ENCODE measurements at regions of chr14 and their contacts with region 1.

Region 1: GRCh38 chr14:56339855-56340701 is 221.9 kb downstream of the PELI2 start:
- DNase-seq: peak; percentile 84 to 91
- ATAC-seq: peak; percentile 91
- H3K4me3 ChIP-seq: no peak overlapping the region
- H3K27ac ChIP-seq: no peak overlapping the region
- H3K4me1 ChIP-seq: peaks cover 2 to 8% of the 10 kb centered on the region in 2 donors
- H3K27me3 ChIP-seq: no peaks in the 10 kb centered on the region

Region 2: DNA sequence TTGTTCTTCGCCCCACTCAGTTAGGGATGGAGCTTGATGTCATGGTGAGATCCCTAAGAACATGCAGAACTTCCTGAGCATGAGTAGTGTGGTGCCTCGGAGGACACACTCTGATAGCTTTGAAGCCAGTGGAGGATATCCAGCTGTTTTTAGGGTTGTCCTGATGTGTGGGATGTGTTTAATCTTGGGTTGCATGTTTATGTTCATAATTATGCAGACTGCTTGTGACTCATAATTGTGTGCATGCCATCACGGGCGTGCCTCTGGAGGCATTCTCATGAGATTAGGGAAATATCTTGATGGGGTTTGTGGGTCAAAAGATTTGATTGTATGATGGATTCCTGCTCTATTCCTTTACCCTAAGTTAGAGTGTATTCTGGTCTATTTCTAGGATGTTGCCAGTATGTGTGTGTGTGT is 489.2 kb before region 1 on chr14:
- intact Hi-C with region 1: loop called in 1 of 2 experiments (anchors 10 kb)
- DNase-seq: no peak
- ATAC-seq: no peak
- H3K4me3 ChIP-seq: no peak overlapping the region
- H3K27ac ChIP-seq: no peak overlapping the region
- H3K4me1 ChIP-seq: peaks cover 0 to 12% of the 10 kb centered on the region in 2 donors
- H3K27me3 ChIP-seq: no peaks in the 10 kb centered on the region

Region 3: GRCh38 chr14:55938249-55938791 is 401.8 kb before region 1 on chr14:
- intact Hi-C with region 1: no loop called
- DNase-seq: peak in 1 of 2 donors; percentile 47
- ATAC-seq: no peak
- H3K4me3 ChIP-seq: no peak overlapping the region
- H3K27ac ChIP-seq: no peak overlapping the region
- H3K4me1 ChIP-seq: no peaks in the 10 kb centered on the region
- H3K27me3 ChIP-seq: no peaks in the 10 kb centered on the region

Region 4: GRCh38 chr14:56117765-56118610 is 222.1 kb before region 1 on chr14 and contains the start of gene PELI2:
- intact Hi-C with region 1: loop called in 1 of 2 experiments (anchors 5 kb)
- DNase-seq: peak; percentile 87 to 93
- ATAC-seq: peak; percentile 91
- H3K4me3 ChIP-seq: peak within 1 kb of the TSS; percentile 79 to 96
- H3K27ac ChIP-seq: peak within 1 kb of the TSS; percentile 70 to 73
- H3K4me1 ChIP-seq: peaks cover 4 to 8% of the 10 kb centered on the region in 2 donors
- H3K27me3 ChIP-seq: no peaks in the 10 kb centered on the region
- total RNA-seq, gene PELI2: 19.7 to 22.8 TPM

Region 5: GRCh38 chr14:56378475-56378877 is 38.4 kb after region 1 on chr14:
- intact Hi-C with region 1: loop called in 1 of 2 experiments (anchors 5 kb)
- DNase-seq: no peak
- ATAC-seq: peak; percentile 83
- H3K4me3 ChIP-seq: no peak overlapping the region
- H3K27ac ChIP-seq: peak overlapping the region; percentile 84 to 90
- H3K4me1 ChIP-seq: peaks cover 8 to 14% of the 10 kb centered on the region in 2 donors
- H3K27me3 ChIP-seq: no peaks in the 10 kb centered on the region

Region 6: GRCh38 chr14:56422703-56423213 is 82.7 kb after region 1 on chr14:
- intact Hi-C with region 1: loop called in 1 of 2 experiments (anchors 5 kb)
- DNase-seq: peak in 1 of 2 donors; percentile 62
- ATAC-seq: peak; percentile 86
- H3K4me3 ChIP-seq: no peak overlapping the region
- H3K27ac ChIP-seq: no peak overlapping the region
- H3K4me1 ChIP-seq: no peaks in the 10 kb centered on the region
- H3K27me3 ChIP-seq: no peaks in the 10 kb centered on the region

Measured in aorta (tissue), 5 donors.